Cardiac septum (tissue), 1 donor: ENCODE measurements at regions of chr1 and their contacts with region 1.

Region 1: DNA sequence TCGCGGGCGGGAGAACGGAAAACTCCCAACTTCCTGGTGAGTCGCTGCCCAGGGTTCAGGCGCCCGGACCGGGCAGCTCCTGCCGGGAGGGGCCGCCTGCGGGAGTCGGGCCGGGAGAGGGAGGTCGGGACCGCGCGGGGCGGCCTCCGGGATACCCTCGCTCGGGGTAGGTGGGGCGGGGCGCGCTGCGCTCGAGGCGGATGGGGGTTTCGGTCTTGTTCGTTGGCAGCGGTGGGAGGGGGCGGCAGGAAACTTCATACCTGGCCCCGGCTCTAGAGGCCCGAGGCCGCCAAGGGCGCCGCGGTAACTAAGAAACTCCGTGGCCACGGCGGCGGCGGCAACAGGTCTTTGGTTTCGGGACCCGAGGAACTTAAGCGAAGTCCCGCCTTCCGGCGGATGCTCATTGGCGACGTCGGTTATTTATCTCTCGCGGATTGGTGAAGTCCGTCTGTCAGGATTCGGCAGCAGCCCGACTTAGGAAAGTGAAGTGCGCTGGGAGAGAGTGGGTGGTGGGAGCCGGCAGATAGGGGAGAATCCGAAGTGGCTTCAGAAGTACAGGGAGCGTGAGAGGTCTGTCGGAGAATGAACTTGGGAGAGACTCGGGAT is 546 bp downstream of the NEK7 start:
- DNase-seq: peak; percentile 96

Region 2: GRCh38 chr1:197775282-197776262 is 381.8 kb before region 1 on chr1 and contains the start of gene DENND1B:
- intact Hi-C with region 1: loop called (anchors 10 kb)
- DNase-seq: peak; percentile 94
- total RNA-seq, gene DENND1B: 22.0 TPM

Region 3: DNA sequence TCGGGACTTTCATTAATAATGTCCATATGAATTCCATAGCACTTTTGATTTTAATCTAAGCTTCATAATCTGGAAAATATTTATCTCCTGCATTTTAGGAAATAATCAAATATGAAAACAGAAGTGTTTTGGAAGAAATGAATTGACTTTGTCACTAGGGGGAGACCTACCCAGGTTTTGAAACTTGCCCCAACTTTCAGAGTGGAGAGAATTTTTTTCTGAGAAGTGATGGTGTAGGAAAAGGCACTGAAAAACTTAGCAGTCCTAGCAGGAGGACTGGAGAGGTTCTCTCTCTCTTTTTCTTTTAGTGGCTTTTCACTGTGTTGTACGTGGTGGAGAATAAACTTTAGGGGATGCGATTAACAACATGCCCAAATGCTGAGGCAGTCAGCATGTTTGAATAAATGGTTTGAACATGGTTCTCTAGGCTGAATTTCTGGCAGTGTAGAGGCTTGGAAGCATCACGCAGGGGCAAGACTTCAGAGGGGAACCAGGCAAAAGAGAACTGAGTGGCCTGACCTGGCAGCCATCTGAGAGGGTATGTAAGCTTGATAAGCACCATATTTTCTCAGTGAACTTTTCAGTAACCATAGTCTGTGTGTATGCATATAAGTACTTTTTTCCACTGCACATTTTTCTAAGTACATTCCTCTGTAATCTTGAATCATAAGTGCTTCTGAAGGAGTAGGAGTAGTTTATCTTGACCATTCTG is 68.8 kb before region 1 on chr1:
- intact Hi-C with region 1: loop called (anchors 2 kb)
- DNase-seq: no peak

Region 4: DNA sequence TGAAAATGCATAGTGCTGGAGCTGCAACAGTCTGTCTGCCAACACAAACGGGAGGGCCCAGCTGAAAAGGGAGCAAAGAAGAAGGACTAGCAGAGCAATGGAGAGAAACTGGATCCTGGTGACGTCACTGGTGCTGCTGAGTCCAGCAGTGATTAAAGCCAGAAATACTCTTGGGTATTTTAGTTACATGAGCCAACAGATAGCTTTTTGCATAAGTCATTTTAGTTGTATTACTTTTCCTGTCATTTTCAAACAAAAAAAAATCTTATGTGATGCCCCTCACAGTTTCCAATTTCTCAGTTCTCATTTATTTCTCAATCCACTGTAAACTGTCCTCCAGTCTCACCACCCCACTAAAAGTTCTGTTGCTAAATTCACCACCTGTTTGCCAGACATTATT is 39.2 kb before region 1 on chr1:
- intact Hi-C with region 1: loop called (anchors 2 kb)
- DNase-seq: peak; percentile 78

Region 5: GRCh38 chr1:198125995-198126735 is 31.2 kb before region 1 on chr1:
- intact Hi-C with region 1: loop called (anchors 2 kb)
- DNase-seq: no peak

Region 6: GRCh38 chr1:198201956-198202784 is 44.8 kb after region 1 on chr1:
- intact Hi-C with region 1: loop called (anchors 5 kb)
- DNase-seq: peak; percentile 72

Region 7: DNA sequence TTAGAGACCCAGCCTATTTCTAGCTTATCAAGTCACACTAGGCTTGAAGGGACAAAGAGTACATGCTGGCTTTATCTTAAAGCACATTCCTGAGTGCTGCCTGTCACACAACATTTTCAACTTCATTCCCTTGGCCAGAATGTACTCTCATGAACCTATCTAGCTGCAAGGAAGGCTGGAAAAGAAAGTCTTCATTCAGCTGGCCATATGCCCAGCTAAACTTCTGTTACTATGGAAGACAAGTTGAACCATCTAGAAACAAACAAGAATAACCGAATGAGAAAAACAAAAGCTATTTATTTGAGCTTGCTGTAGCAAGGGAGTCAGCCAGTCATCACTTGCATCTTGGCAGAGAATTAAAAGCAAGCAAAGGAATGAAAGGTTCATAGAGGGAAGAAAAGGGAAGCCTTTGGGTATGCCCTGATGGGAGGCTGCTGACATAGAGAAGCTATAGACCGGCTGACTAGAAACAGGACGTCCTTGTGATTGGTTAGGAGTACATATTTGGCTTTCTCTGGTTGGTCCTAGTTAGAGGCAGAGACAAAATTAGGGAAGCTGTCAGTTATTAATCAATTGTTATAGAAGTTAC is 107.8 kb after region 1 on chr1:
- intact Hi-C with region 1: loop called (anchors 5 kb)
- DNase-seq: no peak